ENCODE measurements at regions of chr11 and their contacts with region 1.

Region 1: DNA sequence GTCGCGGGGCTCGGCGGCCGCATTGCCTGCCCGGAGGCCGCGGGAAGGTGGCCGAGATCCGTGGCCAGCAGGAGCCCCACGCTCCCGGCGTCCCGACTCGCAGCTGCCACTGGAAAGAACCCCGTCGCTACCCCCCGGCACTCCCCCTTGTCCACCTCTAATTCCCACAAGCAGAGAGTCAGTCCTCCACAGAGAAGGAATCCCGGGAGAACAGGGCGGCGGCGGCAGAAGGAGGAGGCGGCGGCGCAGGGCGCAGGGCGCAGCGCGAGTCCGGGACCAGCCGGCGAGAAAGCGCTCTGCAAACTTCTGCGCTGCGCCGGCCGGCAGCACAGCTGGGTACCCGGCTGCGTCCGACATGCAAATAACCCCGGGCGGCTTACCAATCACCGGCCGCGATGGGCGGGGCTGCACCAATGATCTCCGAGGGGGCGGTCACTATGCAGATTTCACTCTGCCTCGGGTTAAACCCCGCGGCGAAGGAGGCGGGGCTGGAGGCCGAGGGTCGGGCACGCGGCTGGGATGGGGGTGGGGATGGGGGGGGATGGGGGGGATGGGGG is at the start of gene ABTB2:
- DNase-seq: peak; percentile 99
- H3K4me3 ChIP-seq: peak within 1 kb of the TSS; percentile 41 to 53
- H3K27ac ChIP-seq: peak within 1 kb of the TSS; percentile 76 to 79
- H3K4me1 ChIP-seq: peaks cover 6% of the 10 kb centered on the region
- H3K27me3 ChIP-seq: no peaks in the 10 kb centered on the region
- CTCF ChIP-seq: peak in 1 of 4 experiments; percentile 18
- POLR2A ChIP-seq: peak; percentile 99
- total RNA-seq, gene ABTB2: 3.0 to 13.7 TPM

Region 2: DNA sequence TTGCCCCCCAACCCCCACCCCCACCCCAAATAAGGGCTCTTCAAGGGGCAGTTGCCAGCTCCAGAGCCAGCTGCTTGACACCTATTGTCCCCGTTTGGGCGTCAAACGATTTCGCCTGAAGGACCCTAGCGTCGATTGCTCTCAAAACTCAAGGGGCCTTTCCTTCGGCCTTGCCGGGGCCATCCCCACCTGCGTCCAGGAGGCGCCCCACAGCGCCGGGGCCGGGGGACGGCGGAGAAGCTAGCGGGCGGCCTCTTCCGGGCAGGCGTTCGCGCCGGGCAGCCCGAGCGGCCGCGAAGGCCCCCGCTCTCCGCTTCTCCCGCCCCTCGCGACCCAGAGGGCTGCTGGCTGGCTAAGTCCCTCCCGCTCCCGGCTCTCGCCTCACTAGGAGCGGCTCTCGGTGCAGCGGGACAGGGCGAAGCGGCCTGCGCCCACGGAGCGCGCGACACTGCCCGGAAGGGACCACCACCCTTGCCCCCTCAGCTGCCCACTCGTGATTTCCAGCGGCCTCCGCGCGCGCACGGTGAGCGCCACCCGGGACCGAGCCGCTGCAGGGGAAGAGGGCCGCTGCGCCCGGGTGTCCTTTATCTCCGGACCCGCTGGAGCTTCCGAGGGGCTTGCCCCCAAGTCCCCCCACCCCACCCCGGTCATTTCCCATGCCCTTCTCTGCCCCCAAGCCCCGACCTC is 306.3 kb before region 1 on chr11 and contains the start of gene CAPRIN1:
- intact Hi-C with region 1: loop called (anchors 5 kb)
- DNase-seq: peak; percentile 80
- H3K4me3 ChIP-seq: peak within 1 kb of the TSS; percentile 94 to 97
- H3K27ac ChIP-seq: peak within 1 kb of the TSS; percentile 97 to 98
- H3K4me1 ChIP-seq: peaks cover 5% of the 10 kb centered on the region
- H3K27me3 ChIP-seq: no peaks in the 10 kb centered on the region
- CTCF ChIP-seq: peak in 1 of 4 experiments; percentile 26
- POLR2A ChIP-seq: peak; percentile 57
- total RNA-seq, gene CAPRIN1: 145 to 199 TPM

Region 3: DNA sequence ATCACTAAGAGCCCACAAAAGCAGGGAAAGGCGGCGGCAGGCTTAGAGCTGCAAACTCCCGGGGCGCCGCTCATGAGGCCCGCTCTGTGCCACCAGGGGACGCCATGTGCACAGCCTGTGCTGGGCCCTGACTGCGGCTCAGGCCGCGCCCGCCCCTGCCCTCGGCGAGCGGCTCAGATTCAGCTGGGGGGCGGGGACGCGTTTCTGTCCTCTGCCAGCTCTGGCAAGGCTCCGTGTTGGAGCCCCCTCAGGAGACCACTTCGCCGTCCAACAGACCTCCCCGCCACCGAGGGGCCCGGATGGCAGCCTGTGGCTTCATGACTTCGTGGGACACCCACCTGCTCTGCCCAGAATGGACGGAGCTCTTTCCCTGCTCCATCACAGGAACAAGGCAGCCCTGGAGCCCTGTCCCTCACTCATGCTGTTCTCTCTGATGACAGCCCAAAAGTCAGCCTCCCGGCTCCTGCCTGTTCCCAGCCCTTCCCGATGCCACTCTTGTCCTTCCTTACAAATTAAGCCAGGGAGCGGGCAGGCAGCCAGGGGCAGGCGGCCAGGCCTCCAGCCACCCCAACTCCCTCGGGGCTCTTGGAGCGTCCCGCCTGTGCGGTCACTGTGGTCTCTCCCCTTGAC is 183.3 kb before region 1 on chr11:
- intact Hi-C with region 1: loop called (anchors 1 kb)
- DNase-seq: peak; percentile 83
- H3K4me3 ChIP-seq: peak overlapping the region; percentile 6 to 9
- H3K27ac ChIP-seq: peak overlapping the region in 1 of 2 donors; percentile 9
- H3K4me1 ChIP-seq: peaks cover 3% of the 10 kb centered on the region
- H3K27me3 ChIP-seq: no peaks in the 10 kb centered on the region
- CTCF ChIP-seq: peak; percentile 89 to 98 (median 94)
- POLR2A ChIP-seq: no peak

Region 4: GRCh38 chr11:34266090-34266912 is 91.5 kb before region 1 on chr11:
- intact Hi-C with region 1: loop called (anchors 5 kb)
- DNase-seq: no peak
- H3K4me3 ChIP-seq: no peak overlapping the region
- H3K27ac ChIP-seq: no peak overlapping the region
- H3K4me1 ChIP-seq: no peaks in the 10 kb centered on the region
- H3K27me3 ChIP-seq: no peaks in the 10 kb centered on the region
- CTCF ChIP-seq: no peak
- POLR2A ChIP-seq: no peak

Region 5: DNA sequence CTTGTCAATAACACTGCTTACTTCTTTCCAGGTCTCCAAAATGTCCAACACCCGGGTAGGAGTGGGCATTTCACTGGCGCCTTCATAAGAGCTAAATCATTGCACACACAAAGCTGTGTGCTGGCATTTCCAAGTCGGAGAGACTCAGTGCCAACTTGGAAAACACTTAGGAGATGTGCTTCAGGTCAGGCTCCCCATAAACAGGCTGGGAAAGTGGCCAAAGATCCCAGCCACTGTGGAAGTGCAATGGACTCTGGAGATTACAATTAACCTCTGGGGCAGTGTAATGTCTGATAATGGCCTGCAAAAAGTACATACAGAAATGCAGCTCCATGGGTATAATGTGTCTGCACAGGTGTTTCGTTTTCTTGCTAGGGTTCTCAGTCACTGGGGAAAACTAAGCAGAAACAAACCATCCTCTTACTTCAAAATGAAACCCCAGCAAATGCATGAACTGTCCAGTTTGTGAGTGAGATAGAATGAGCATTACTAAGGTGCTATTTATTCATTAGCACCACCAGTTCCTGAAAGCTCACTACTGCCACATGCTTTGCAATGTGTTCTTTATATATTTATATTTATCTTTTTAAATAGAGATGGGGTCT is 79.0 kb before region 1 on chr11:
- intact Hi-C with region 1: no loop called
- DNase-seq: no peak
- H3K4me3 ChIP-seq: no peak overlapping the region
- H3K27ac ChIP-seq: no peak overlapping the region
- H3K4me1 ChIP-seq: peaks cover 3% of the 10 kb centered on the region
- H3K27me3 ChIP-seq: no peaks in the 10 kb centered on the region
- CTCF ChIP-seq: no peak
- POLR2A ChIP-seq: no peak

Region 6: GRCh38 chr11:34890812-34891211 is 533.0 kb after region 1 on chr11:
- intact Hi-C with region 1: loop called (anchors 10 kb)
- DNase-seq: no peak
- H3K4me3 ChIP-seq: no peak overlapping the region
- H3K27ac ChIP-seq: no peak overlapping the region
- H3K4me1 ChIP-seq: no peaks in the 10 kb centered on the region
- H3K27me3 ChIP-seq: no peaks in the 10 kb centered on the region
- CTCF ChIP-seq: peak in 3 of 4 experiments; percentile 51 to 91 (median 76)
- POLR2A ChIP-seq: no peak